ENCODE measurements at regions of chr17 and their contacts with region 1.

Region 1: GRCh38 chr17:65173284-65173793 is 36.2 kb downstream of the RGS9 start:
- DNase-seq: peak; percentile 94
- H3K4me3 Mint-ChIP-seq: no peak overlapping the region
- H3K27ac Mint-ChIP-seq: no peak overlapping the region
- H3K4me1 Mint-ChIP-seq: peaks cover 41% of the 10 kb centered on the region
- H3K27me3 Mint-ChIP-seq: no peaks in the 10 kb centered on the region

Region 2: DNA sequence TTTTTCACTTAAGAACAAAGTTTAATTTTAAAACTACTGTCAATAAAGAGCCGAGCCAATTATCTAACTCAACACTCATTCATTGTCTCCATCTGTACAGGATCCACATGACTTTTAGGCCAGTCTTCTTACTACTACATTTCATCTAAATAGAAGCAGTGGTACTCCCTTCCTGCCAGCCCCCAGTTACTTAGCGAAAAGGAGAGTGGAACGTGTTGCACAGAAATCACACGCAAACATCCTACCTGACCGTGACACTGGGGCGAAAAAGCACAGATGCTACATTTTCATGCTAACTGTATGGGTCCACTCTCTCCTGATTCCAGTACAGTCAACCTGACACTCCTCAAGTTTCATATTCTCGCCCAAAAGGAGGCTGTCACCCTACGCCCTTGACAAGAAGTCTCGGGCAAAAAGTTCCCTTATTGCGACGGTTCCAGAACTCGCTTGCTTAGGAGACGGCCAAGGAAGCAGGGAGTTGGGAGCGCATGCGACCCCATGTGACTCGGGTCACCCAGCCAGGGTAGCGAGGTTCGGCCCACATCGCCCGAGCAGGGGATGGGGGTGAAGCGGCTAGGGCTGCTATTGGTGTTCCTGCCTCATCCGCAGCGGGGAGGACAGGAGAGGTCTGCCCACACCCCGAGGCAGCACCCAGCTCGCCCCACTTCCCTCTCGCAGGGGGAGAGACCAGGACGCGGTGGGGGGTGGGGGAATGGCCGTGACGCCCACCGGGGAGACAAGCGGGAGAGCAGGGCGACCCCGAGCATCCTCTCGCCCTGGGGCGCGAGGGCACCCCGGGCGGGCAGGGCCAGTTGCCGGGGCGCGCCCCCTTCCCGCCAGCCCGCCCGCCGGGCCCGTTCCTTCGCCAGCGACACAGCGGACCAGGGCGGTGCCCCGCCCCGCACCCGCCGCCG is 117.7 kb before region 1 on chr17:
- CTCF ChIA-PET with region 1: interaction called, 3 read pairs
- POLR2A ChIA-PET with region 1: interaction called, 29 read pairs
- DNase-seq: peak; percentile 57
- H3K4me3 Mint-ChIP-seq: peak overlapping the region; percentile 96
- H3K27ac Mint-ChIP-seq: peak overlapping the region; percentile 91
- H3K4me1 Mint-ChIP-seq: peaks cover 51% of the 10 kb centered on the region
- H3K27me3 Mint-ChIP-seq: peaks cover 2% of the 10 kb centered on the region

Region 3: GRCh38 chr17:65122836-65123756 is 50.2 kb before region 1 on chr17:
- CTCF ChIA-PET with region 1: interaction called, 4 read pairs
- POLR2A ChIA-PET with region 1: interaction called, 44 read pairs
- DNase-seq: peak; percentile 89
- H3K4me3 Mint-ChIP-seq: peak overlapping the region; percentile 75
- H3K27ac Mint-ChIP-seq: peak overlapping the region; percentile 97
- H3K4me1 Mint-ChIP-seq: peaks cover 48% of the 10 kb centered on the region
- H3K27me3 Mint-ChIP-seq: peaks cover 11% of the 10 kb centered on the region

Region 4: DNA sequence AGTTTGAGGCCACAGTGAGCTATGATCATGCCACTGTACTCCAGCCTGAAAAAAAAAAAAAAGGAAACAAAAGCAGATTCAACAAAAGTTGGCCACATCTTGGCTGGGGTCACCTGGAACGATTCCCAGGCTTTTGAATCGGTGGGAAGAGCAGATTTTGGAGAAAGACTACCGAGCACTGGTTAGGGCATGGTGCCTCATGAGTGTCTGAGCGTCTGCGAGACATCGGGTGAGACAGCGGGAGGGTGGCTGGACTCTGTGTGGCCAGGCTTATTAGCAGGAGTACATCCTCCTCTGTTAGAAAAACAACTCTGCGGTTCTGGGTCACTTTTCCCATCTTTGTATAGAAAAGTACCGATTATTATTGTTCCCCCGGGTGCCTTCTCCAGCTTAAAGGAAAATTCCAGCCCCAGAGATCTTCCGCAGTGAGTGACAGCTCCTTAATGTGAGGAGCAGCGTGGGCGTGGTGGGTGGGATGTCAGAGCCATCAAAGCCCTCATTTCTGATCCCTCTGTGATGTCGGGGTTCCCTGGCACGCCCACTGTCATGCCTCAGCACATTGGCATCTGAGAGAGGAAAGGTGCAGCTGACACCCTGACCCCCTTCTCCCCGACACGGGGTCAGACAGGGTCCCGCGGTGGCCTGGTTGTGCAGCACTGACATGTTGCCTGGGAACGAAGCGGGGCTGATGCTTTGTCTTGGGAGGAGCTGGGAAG is 29.3 kb before region 1 on chr17:
- CTCF ChIA-PET with region 1: interaction called, 22 read pairs
- POLR2A ChIA-PET with region 1: interaction called, 34 read pairs
- DNase-seq: no peak
- H3K4me3 Mint-ChIP-seq: no peak overlapping the region
- H3K27ac Mint-ChIP-seq: no peak overlapping the region
- H3K4me1 Mint-ChIP-seq: peaks cover 34% of the 10 kb centered on the region
- H3K27me3 Mint-ChIP-seq: peaks cover 3% of the 10 kb centered on the region

Measured in activated CD4-positive, alpha-beta memory T cell treated with anti-CD3 and anti-CD28 coated beads, Interleukin-2, amount 10 ng/mL, durations not matched to agents 7 days and 5 days (primary cell).